CD8-positive, alpha-beta T cell (primary cell): ENCODE measurements at regions of chr22 and their contacts with region 1.

Region 1: GRCh38 chr22:33038131-33038772 is 19.9 kb downstream of the SYN3 start:
- DNase-seq: no peak
- ATAC-seq: no peak
- H3K4me3 ChIP-seq: no peak overlapping the region
- H3K4me3 Mint-ChIP-seq: no peak overlapping the region
- H3K27ac ChIP-seq: no peak overlapping the region
- H3K27ac Mint-ChIP-seq: no peak overlapping the region
- H3K4me1 ChIP-seq: no peaks in the 10 kb centered on the region
- H3K4me1 Mint-ChIP-seq: no peaks in the 10 kb centered on the region
- H3K27me3 ChIP-seq: no peaks in the 10 kb centered on the region
- H3K27me3 Mint-ChIP-seq: peaks cover 10% of the 10 kb centered on the region
- CTCF ChIP-seq: no peak

Region 2: GRCh38 chr22:33012833-33013450 is 25.3 kb before region 1 on chr22:
- CTCF ChIA-PET with region 1: no interaction called
- POLR2A ChIA-PET with region 1: no interaction called
- intact Hi-C with region 1: no loop called
- DNase-seq: no peak
- ATAC-seq: no peak
- H3K4me3 ChIP-seq: no peak overlapping the region
- H3K4me3 Mint-ChIP-seq: no peak overlapping the region
- H3K27ac ChIP-seq: no peak overlapping the region
- H3K27ac Mint-ChIP-seq: no peak overlapping the region
- H3K4me1 ChIP-seq: no peaks in the 10 kb centered on the region
- H3K4me1 Mint-ChIP-seq: no peaks in the 10 kb centered on the region
- H3K27me3 ChIP-seq: no peaks in the 10 kb centered on the region
- H3K27me3 Mint-ChIP-seq: no peaks in the 10 kb centered on the region
- CTCF ChIP-seq: no peak

Region 3: DNA sequence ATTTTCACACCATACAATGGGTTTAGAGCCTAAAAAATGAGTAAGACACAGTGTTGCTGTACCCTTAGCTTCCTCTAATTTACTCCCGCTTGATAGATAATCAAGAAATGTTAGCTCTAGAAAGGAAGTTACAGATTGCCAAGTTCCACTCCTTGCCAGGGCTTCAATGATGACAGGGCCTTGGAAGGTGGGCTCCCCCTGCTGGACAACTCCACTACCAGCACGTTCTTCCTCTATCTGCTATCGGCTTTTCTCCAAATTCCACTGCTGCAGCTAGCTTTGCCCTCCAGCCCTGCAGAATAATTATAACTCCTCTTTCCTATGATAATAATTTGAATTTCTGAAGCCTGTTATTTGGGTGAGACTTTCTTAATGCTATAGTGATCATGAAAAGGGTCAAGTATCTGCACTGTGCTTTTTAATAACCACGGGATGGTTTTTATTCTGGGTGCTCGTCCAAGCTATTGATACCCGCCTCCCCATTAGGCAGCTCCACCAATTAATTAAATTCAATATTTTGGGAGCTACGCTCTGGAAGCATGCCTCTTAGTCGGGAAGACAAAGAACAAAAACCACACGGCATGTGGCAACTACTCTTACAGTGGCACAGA is 11.0 kb after region 1 on chr22:
- CTCF ChIA-PET with region 1: interaction called, 20 read pairs
- POLR2A ChIA-PET with region 1: no interaction called
- intact Hi-C with region 1: no loop called
- DNase-seq: peak in 8 of 9 experiments; percentile 18 to 66 (median 53)
- ATAC-seq: no peak
- H3K4me3 ChIP-seq: no peak overlapping the region
- H3K4me3 Mint-ChIP-seq: no peak overlapping the region
- H3K27ac ChIP-seq: no peak overlapping the region
- H3K27ac Mint-ChIP-seq: no peak overlapping the region
- H3K4me1 ChIP-seq: no peaks in the 10 kb centered on the region
- H3K4me1 Mint-ChIP-seq: no peaks in the 10 kb centered on the region
- H3K27me3 ChIP-seq: peaks cover 0 to 4% of the 10 kb centered on the region in 2 experiments
- H3K27me3 Mint-ChIP-seq: peaks cover 29% of the 10 kb centered on the region
- CTCF ChIP-seq: peak; percentile 71

Region 4: GRCh38 chr22:33101550-33101949 is 63.3 kb after region 1 on chr22:
- CTCF ChIA-PET with region 1: no interaction called
- POLR2A ChIA-PET with region 1: no interaction called
- intact Hi-C with region 1: loop called in 1 of 2 experiments (anchors 2 kb)
- DNase-seq: no peak
- ATAC-seq: no peak
- H3K4me3 ChIP-seq: no peak overlapping the region
- H3K4me3 Mint-ChIP-seq: no peak overlapping the region
- H3K27ac ChIP-seq: no peak overlapping the region
- H3K27ac Mint-ChIP-seq: no peak overlapping the region
- H3K4me1 ChIP-seq: no peaks in the 10 kb centered on the region
- H3K4me1 Mint-ChIP-seq: no peaks in the 10 kb centered on the region
- H3K27me3 ChIP-seq: no peaks in the 10 kb centered on the region
- H3K27me3 Mint-ChIP-seq: peaks cover 6% of the 10 kb centered on the region
- CTCF ChIP-seq: no peak